ENCODE measurements at regions of chr9 and their contacts with region 1.

Region 1: DNA sequence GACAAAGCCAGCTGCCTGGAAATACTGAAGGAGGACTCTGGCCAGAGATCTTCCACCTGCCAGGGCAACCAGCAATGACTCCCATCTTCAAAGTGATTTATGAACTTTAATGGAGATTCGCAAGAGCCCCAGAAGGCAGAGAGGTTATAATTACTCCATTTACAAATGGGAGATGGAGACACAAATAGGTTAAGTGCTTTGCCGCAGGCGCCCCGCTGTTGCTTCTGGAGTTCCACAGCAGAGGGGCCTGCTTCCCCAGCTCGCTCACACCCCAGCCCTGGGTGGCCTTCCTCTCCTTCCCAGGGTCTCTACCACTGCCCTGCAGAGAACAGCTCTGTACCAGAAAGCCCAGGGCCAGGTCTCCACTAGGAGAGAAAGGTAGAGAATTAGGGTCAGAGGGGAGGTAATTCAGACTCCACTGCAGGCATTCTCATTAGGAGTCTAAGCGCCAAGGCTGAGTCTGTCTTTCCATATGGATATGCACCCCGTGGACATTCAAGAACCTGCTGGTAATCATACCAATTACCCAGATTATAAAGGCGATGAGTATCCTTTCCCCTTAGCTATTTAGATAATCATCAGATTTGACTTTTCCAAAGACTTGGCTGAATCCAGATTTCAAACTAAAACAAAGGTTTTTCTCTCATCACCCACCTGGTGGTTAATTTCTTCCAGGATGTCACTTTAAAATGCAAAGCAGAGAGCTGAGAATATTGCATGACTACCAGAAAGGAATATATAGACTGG is 157.6 kb upstream of the TUT7 start:
- DNase-seq: no peak
- ATAC-seq: no peak
- H3K4me3 ChIP-seq: no peak overlapping the region
- H3K27ac ChIP-seq: no peak overlapping the region
- H3K4me1 ChIP-seq: peaks cover 14% of the 10 kb centered on the region
- H3K27me3 ChIP-seq: no peaks in the 10 kb centered on the region
- CTCF ChIP-seq: no peak
- POLR2A ChIP-seq: no peak
- RAD21 ChIP-seq: no peak

Region 2: DNA sequence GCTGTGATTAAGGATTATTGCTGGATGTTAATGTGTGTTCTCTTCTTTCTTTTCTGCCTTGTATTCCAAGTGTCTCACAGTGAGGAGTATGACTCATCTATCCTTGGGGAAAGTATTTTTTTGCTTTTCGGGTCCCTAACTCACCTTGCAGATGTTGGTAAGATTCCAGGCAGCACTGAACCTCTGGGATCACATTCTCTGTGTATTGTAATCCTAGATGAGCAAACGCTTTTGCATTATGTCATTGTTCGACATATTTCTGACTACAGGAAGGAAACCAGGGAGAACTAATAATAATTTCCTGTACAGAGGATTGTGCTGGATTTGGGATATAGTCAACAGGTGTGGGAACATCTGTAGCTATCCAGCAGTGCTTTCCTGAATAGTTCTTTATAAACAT is 88.5 kb after region 1 on chr9:
- CTCF ChIA-PET with region 1: no interaction called
- POLR2A ChIA-PET with region 1: no interaction called
- dilution Hi-C with region 1: no loop called
- in situ Hi-C with region 1: no loop called
- intact Hi-C with region 1: loop called (anchors 5 kb)
- DNase-seq: peak; percentile 58
- ATAC-seq: peak; percentile 31; the same call in 1 of the 2 replicates
- H3K4me3 ChIP-seq: no peak overlapping the region
- H3K27ac ChIP-seq: no peak overlapping the region
- H3K4me1 ChIP-seq: peaks cover 16% of the 10 kb centered on the region
- H3K27me3 ChIP-seq: no peaks in the 10 kb centered on the region
- CTCF ChIP-seq: no peak
- POLR2A ChIP-seq: no peak
- RAD21 ChIP-seq: no peak